Gastrocnemius medialis (tissue), 4 donors: ENCODE measurements at regions of chr5 and their contacts with region 1.

Region 1: GRCh38 chr5:126808521-126808988 is 31.6 kb downstream of the LMNB1 start:
- DNase-seq: no peak
- ATAC-seq: no peak
- H3K4me3 ChIP-seq: no peak overlapping the region
- H3K27ac ChIP-seq: no peak overlapping the region
- H3K4me1 ChIP-seq: no peaks in the 10 kb centered on the region
- H3K27me3 ChIP-seq: no peaks in the 10 kb centered on the region
- CTCF ChIP-seq: peak in 2 of 5 experiments; percentile 12 to 38
- POLR2A ChIP-seq: no peak

Region 2: DNA sequence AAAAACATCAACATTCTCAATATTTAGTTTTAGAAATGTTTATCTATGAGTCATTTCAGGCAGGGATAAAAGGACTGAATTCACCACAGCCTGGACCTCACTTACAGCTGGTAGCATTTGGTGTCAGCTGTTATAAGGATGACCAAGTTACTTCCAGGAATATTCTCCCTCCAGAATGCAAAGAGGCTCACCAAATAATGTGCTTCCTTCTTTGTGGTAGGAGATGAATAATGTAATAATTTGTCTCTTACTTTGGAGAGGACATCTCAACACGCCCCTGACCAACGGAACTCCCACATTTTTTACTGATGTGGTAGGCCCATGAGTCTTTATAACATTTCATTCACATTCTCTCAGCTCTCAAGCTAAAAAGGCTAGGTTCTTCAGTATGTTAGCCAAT is 1211.2 kb before region 1 on chr5:
- in situ Hi-C with region 1: no loop called
- intact Hi-C with region 1: no loop called
- DNase-seq: no peak
- ATAC-seq: no peak
- H3K4me3 ChIP-seq: no peak overlapping the region
- H3K27ac ChIP-seq: no peak overlapping the region
- H3K4me1 ChIP-seq: no peaks in the 10 kb centered on the region
- H3K27me3 ChIP-seq: no peaks in the 10 kb centered on the region
- CTCF ChIP-seq: no peak
- POLR2A ChIP-seq: no peak

Region 3: GRCh38 chr5:126676195-126676624 is 132.3 kb before region 1 on chr5:
- in situ Hi-C with region 1: no loop called
- intact Hi-C with region 1: loop called (anchors 5 kb)
- DNase-seq: peak; percentile 22 to 27
- ATAC-seq: peak; percentile 72 to 91
- H3K4me3 ChIP-seq: no peak overlapping the region
- H3K27ac ChIP-seq: no peak overlapping the region
- H3K4me1 ChIP-seq: no peaks in the 10 kb centered on the region
- H3K27me3 ChIP-seq: no peaks in the 10 kb centered on the region
- CTCF ChIP-seq: peak; percentile 63 to 83 (median 77)
- POLR2A ChIP-seq: no peak

Region 4: DNA sequence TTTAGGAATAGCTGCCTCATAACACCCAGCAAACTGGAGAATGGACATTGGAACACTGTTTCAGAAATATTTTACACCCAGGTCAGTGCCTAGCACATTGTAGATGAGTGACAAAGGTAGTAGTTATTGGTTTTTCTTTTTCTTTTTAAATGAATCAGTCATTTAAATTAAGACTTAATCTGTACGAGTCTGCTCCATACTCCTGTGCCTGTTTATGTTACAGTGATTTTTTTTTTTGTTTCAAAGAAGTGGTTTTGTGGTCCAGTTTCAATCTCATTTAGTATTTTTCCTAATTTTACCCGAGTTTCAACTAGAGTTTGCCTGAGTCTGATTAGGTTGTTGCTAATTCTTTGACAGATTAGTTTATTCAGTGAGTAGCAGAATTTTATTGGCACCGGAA is 15.5 kb before region 1 on chr5:
- in situ Hi-C with region 1: no loop called
- intact Hi-C with region 1: no loop called
- DNase-seq: no peak
- ATAC-seq: no peak
- H3K4me3 ChIP-seq: no peak overlapping the region
- H3K27ac ChIP-seq: no peak overlapping the region
- H3K4me1 ChIP-seq: no peaks in the 10 kb centered on the region
- H3K27me3 ChIP-seq: no peaks in the 10 kb centered on the region
- CTCF ChIP-seq: no peak
- POLR2A ChIP-seq: no peak

Region 5: GRCh38 chr5:126837906-126838539 is 29.5 kb after region 1 on chr5:
- in situ Hi-C with region 1: no loop called
- intact Hi-C with region 1: loop called (anchors 1 kb)
- DNase-seq: no peak
- ATAC-seq: no peak
- H3K4me3 ChIP-seq: no peak overlapping the region
- H3K27ac ChIP-seq: no peak overlapping the region
- H3K4me1 ChIP-seq: no peaks in the 10 kb centered on the region
- H3K27me3 ChIP-seq: no peaks in the 10 kb centered on the region
- CTCF ChIP-seq: peak in 3 of 5 experiments; percentile 10 to 34 (median 27)
- POLR2A ChIP-seq: no peak